T-cell (primary cell): ENCODE measurements at regions of chr10 and their contacts with region 1.

Region 1: GRCh38 chr10:124436191-124436638 is 13.6 kb downstream of the NKX1-2 start:
- DNase-seq: no peak
- ATAC-seq: no peak
- H3K4me3 ChIP-seq: no peak overlapping the region
- H3K4me3 Mint-ChIP-seq: no peak overlapping the region
- H3K27ac ChIP-seq: no peak overlapping the region
- H3K27ac Mint-ChIP-seq: no peak overlapping the region
- H3K4me1 ChIP-seq: no peaks in the 10 kb centered on the region
- H3K4me1 Mint-ChIP-seq: peaks cover 0 to 3% (median 1%) of the 10 kb centered on the region in 3 donors
- H3K27me3 ChIP-seq: peaks cover 0 to 13% of the 10 kb centered on the region in 2 experiments
- H3K27me3 Mint-ChIP-seq: peaks cover 4 to 8% of the 10 kb centered on the region in 2 donors

Region 2: DNA sequence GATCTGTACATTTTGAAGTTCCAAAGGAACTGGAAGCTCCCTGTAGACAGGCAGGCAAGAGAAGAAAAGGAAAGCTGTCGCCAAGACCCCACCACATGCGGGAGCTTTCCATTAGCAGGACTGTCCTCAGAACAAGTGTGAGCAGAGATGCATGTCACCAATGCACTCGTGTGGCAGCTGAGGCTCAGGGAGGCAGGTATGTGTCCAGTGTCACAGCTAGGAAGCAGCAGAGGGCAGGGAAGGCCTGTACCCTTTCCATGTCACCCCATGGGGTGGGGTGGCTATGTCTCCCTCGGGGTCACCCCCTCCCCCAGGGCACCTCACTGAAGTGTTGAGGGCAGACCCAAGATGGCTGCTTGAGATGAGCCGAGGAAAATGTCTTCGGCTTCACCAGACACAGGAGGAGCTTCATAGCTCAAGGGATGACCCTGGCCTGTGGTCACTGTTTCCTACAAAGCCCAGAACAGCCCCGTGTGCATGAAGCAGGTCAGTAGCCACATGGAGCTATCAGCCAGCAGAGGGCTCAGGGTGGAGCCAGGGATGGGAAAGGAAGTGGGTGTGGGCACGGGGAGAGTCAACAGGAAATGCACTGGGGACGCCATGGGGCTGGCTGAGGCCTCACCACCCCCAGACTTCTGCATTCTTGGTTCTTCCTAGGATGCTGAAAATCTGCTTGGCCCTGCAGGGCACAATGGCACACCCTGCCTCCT is 211.4 kb after region 1 on chr10:
- CTCF ChIA-PET with region 1: no interaction called
- POLR2A ChIA-PET with region 1: interaction called in 1 of 2 experiments, 11 read pairs
- DNase-seq: peak; percentile 59 to 84 (median 72)
- ATAC-seq: peak; percentile 75 to 84 (median 78)
- H3K4me3 ChIP-seq: peak overlapping the region; percentile 35 to 52
- H3K4me3 Mint-ChIP-seq: peak overlapping the region; percentile 69 to 79 (median 70)
- H3K27ac ChIP-seq: peak overlapping the region; percentile 92
- H3K27ac Mint-ChIP-seq: peak overlapping the region; percentile 98 to 99
- H3K4me1 ChIP-seq: peaks cover 53 to 99% of the 10 kb centered on the region in 2 experiments
- H3K4me1 Mint-ChIP-seq: peaks cover 87 to 99% (median 92%) of the 10 kb centered on the region in 3 donors
- H3K27me3 ChIP-seq: no peaks in the 10 kb centered on the region
- H3K27me3 Mint-ChIP-seq: no peaks in the 10 kb centered on the region